Calu3 (cell line): ENCODE measurements at regions of chr13 and their contacts with region 1.

Region 1: DNA sequence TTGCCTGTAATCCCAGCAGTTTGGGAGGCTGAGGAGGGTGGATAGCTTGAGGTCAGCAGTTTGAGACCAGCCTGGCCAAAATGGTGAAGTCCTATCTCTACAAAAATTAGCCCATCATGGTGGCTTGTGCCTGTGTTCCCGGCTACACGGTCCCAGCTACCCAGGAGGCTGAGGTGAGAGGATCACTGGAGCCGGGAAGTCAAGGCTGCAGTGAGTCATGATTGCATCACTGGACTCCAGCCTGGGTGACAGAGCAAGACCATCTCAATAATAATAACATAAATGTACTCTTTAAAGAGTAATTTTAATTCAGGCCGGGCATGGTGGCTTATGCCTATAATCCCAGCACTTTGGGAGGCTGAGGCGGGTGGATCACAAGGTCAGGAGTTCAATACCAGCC is 38.7 kb downstream of the SKA3 start:
- DNase-seq: peak; percentile 19
- H3K4me3 Mint-ChIP-seq: no peak overlapping the region
- H3K27ac Mint-ChIP-seq: no peak overlapping the region
- H3K4me1 Mint-ChIP-seq: no peaks in the 10 kb centered on the region
- H3K27me3 Mint-ChIP-seq: no peaks in the 10 kb centered on the region
- CTCF ChIP-seq: no peak

Region 2: GRCh38 chr13:20942938-20943559 is 194.6 kb before region 1 on chr13:
- CTCF ChIA-PET with region 1: interaction called, 6 read pairs
- intact Hi-C with region 1: loop called (anchors 2 kb)
- DNase-seq: no peak
- H3K4me3 Mint-ChIP-seq: no peak overlapping the region
- H3K27ac Mint-ChIP-seq: peak overlapping the region; percentile 53
- H3K4me1 Mint-ChIP-seq: peaks cover 7% of the 10 kb centered on the region
- H3K27me3 Mint-ChIP-seq: no peaks in the 10 kb centered on the region
- CTCF ChIP-seq: no peak

Region 3: DNA sequence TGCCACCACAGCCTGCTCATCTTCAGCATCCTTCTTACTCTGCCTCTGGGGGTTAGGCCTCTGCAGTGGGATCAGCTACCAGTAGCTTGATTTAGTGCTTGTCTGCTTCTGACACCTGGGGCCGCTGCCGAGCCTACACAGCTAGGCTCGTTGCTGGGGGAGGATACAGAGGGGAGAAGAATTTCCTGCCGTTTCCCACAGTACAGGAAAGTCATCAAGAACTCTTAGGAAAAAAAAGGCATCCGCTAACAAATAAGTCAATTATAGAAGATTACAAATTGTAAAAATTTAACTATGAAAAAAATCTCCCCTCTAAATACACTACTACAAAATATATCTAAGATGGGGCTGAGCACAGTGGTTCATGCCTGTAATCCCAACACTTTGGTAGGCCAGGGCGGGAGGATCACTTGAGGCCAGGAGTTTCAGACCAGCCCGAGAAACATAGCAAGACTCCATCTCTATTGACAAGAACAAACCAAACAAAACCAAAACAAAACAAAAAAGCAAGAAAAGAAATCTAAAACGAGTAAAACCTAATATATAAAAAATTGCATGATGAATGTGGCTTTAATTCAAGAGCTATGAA is 103.0 kb before region 1 on chr13:
- CTCF ChIA-PET with region 1: no interaction called
- intact Hi-C with region 1: loop called (anchors 10 kb)
- DNase-seq: peak; percentile 49
- H3K4me3 Mint-ChIP-seq: peak overlapping the region; percentile 49
- H3K27ac Mint-ChIP-seq: peak overlapping the region; percentile 93
- H3K4me1 Mint-ChIP-seq: peaks cover 54% of the 10 kb centered on the region
- H3K27me3 Mint-ChIP-seq: no peaks in the 10 kb centered on the region
- CTCF ChIP-seq: no peak

Region 4: DNA sequence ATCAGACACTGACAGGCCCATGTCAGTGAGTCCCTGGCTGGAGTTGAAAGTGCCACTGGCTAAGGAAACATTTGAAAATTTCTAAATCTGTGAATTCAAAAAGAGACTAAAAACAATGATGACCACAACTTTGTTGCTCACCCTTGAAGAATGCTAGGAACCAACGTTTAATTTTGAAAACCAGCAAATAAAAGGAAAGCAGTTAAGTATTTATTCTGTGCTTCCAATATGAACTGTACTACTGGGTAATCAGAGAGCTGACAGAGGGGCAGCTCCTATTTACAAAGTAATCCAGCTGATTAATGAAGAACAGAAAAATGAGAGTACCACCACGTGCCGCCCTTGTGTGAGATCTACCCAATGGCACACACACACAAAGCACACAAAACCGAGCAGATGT is 31.6 kb before region 1 on chr13:
- CTCF ChIA-PET with region 1: no interaction called
- intact Hi-C with region 1: loop called (anchors 1 kb)
- DNase-seq: no peak
- H3K4me3 Mint-ChIP-seq: no peak overlapping the region
- H3K27ac Mint-ChIP-seq: no peak overlapping the region
- H3K4me1 Mint-ChIP-seq: no peaks in the 10 kb centered on the region
- H3K27me3 Mint-ChIP-seq: no peaks in the 10 kb centered on the region
- CTCF ChIP-seq: no peak

Region 5: DNA sequence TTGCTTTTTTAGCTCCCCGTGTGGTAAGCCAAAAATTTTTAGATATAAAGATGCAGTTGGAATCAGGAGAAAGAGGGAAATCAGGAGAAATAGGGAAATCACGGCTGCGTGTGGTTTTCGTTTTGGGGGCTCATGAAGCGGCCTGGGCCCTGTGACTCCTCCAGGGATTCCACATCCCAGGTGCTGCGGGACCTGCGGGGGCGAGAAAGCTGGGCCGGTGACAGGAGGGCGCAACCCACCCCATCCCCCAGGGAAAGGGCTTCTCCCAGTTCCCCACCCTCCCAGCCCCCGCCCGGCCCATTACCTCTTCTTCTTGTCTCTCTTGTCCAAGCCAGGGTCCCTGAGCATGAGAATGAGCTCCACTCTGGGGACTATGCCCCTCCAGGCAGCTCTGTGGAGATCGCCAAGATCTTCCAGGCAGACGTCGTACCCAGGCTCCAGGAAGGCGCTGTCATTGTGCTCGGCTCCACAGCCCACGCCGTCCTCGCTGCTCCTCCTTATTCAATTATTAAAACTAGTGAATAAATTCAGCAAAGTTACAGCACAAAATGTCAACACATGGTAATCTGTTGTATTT is 149.7 kb after region 1 on chr13:
- CTCF ChIA-PET with region 1: no interaction called
- intact Hi-C with region 1: no loop called
- DNase-seq: no peak
- H3K4me3 Mint-ChIP-seq: no peak overlapping the region
- H3K27ac Mint-ChIP-seq: no peak overlapping the region
- H3K4me1 Mint-ChIP-seq: no peaks in the 10 kb centered on the region
- H3K27me3 Mint-ChIP-seq: peaks cover 18% of the 10 kb centered on the region
- CTCF ChIP-seq: no peak